ENCODE measurements at regions of chr17 and their contacts with region 1.

Region 1: GRCh38 chr17:80254396-80255251 is 6.0 kb upstream of the RNF213 start:
- DNase-seq: peak in 1 of 2 donors; percentile 72
- ATAC-seq: peak; percentile 67 to 74 (median 73)
- H3K4me3 ChIP-seq: no peak overlapping the region
- H3K4me3 Mint-ChIP-seq: peak overlapping the region; percentile 69
- H3K27ac ChIP-seq: peak overlapping the region; percentile 4
- H3K27ac Mint-ChIP-seq: peak overlapping the region; percentile 74 to 76
- H3K4me1 ChIP-seq: peaks cover 19% of the 10 kb centered on the region
- H3K4me1 Mint-ChIP-seq: peaks cover 11 to 26% of the 10 kb centered on the region in 2 donors
- H3K27me3 ChIP-seq: no peaks in the 10 kb centered on the region
- H3K27me3 Mint-ChIP-seq: no peaks in the 10 kb centered on the region
- CTCF ChIP-seq: no peak

Region 2: DNA sequence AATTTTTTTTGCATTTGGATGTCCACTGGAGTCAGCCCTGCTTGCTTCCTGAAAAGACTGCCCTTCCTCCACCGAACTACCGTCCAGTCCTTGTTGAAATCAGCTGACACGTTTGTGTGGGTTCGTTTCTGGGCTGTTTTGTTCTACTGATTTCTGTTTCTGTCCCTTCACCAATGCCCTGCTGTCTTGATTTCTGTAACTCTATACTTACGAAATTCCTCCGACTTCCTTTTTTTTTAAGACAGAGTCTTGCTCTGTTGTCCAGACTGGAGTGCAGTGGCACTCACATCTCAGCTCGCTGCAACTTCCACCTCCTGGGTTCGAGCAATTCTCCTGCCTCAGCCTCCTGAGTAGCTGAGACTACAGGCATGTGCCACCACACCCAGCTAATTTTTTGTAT is 161.7 kb before region 1 on chr17:
- intact Hi-C with region 1: loop called (anchors 10 kb)
- DNase-seq: no peak
- ATAC-seq: peak in 1 of 3 donors; percentile 35
- H3K4me3 ChIP-seq: no peak overlapping the region
- H3K4me3 Mint-ChIP-seq: no peak overlapping the region
- H3K27ac ChIP-seq: no peak overlapping the region
- H3K27ac Mint-ChIP-seq: no peak overlapping the region
- H3K4me1 ChIP-seq: peaks cover 2% of the 10 kb centered on the region
- H3K4me1 Mint-ChIP-seq: no peaks in the 10 kb centered on the region
- H3K27me3 ChIP-seq: no peaks in the 10 kb centered on the region
- H3K27me3 Mint-ChIP-seq: peaks cover 0 to 6% of the 10 kb centered on the region in 2 donors
- CTCF ChIP-seq: no peak

Region 3: DNA sequence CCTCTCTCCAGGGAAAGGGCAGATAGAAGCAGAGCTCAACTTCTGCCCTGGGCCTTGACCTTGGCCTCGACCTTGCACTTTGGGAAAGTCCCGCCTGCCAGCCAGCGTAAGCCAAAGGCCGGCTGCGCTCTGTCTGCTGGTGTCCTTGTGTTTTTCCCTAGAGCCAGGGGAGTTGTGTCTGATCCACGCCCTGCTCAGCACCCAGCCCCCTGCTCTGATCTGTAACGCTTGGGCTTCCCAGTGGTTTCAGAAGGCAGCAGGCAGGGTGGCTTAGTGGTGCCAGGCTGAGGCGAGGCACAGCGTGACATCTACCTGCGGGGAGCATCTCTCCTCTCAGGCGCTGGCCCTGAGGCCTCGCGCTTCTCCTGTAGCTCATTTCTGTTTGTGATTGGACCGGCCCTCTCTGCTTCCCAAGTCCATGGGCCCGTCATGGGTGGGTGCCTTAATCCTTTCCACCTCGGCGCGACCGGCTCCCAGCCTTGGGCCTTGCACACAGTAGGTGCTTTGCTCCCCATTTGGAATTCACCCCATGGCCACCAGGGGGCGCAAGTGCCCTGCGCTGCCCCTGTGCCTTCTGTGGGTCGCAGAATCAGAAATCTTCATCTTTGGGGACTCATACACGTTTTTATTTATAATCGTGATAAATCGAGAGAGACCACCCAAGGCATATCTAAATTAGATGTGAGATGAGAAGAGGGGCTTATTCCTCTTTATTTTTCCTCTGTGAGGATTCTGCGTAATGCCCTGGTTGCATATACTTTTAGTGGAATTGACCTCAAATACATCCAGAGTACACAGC is 58.7 kb before region 1 on chr17:
- intact Hi-C with region 1: loop called (anchors 1 kb)
- DNase-seq: peak; percentile 65 to 78
- ATAC-seq: peak; percentile 53 to 70 (median 59)
- H3K4me3 ChIP-seq: no peak overlapping the region
- H3K4me3 Mint-ChIP-seq: no peak overlapping the region
- H3K27ac ChIP-seq: no peak overlapping the region
- H3K27ac Mint-ChIP-seq: no peak overlapping the region
- H3K4me1 ChIP-seq: no peaks in the 10 kb centered on the region
- H3K4me1 Mint-ChIP-seq: no peaks in the 10 kb centered on the region
- H3K27me3 ChIP-seq: no peaks in the 10 kb centered on the region
- H3K27me3 Mint-ChIP-seq: peaks cover 0 to 7% of the 10 kb centered on the region in 2 donors
- CTCF ChIP-seq: peak; percentile 99

Measured in natural killer cell (primary cell).